ENCODE measurements at regions of chr1 and their contacts with region 1.

Region 1: DNA sequence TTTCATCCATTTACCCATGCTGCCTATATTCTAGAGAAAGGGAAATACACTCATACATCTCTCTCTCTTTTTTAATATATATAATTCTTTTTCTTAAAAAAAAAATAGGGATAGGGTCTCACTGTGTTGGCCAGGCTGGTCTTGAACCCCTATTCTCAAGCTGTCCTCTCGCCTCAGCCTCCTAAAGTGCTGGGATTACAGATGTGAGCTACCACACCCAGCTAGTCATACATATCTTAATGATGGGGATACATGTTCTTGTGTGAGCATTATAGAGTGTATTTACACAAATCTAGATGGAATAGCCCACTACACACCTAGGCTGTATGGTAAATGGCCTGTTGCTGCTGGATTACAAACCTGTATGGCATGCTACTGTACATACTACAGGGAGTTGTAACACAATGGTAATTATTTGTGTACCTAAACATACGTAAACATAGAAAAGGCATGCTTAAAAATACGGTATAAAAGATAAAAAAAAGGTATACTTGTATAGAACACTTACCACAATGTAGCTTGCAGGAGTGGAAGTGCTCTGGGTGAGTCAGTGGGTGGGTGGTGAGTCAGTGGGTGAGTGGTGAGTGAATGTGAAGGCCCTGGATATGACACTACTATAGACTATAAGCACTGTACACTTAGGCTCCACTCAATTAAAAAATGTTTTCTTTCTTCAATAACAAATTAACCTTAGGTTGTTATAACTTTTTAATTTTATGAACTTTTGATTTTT is 72.9 kb downstream of the IVNS1ABP start:
- DNase-seq: no peak
- H3K4me3 Mint-ChIP-seq: no peak overlapping the region
- H3K27ac Mint-ChIP-seq: no peak overlapping the region
- H3K4me1 Mint-ChIP-seq: peaks cover 12% of the 10 kb centered on the region
- H3K27me3 Mint-ChIP-seq: no peaks in the 10 kb centered on the region

Region 2: DNA sequence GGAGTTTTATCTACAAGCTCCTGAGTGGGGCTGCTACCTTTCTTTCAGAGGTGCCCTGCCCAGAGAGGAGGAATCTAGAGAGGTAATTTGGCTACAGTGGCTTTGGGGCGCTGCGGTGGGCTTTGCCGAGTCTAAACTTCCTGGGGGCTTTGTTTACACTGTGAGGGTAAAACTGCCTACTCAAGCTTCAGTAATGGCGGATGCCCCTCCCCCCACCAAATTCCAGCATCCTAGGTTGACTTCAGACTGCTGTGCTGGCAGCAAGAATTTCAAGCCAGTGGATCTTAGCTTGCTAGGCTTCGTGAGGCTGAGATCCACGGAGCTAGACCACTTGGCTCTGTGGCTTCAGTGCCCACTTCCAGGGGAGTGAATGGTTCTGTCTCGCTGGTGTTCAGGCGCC is 43.3 kb before region 1 on chr1:
- intact Hi-C with region 1: no loop called
- DNase-seq: no peak
- H3K4me3 Mint-ChIP-seq: no peak overlapping the region
- H3K27ac Mint-ChIP-seq: no peak overlapping the region
- H3K4me1 Mint-ChIP-seq: no peaks in the 10 kb centered on the region
- H3K27me3 Mint-ChIP-seq: no peaks in the 10 kb centered on the region

Region 3: GRCh38 chr1:185281245-185281644 is 37.1 kb after region 1 on chr1:
- intact Hi-C with region 1: loop called (anchors 5 kb)
- DNase-seq: peak; percentile 13
- H3K4me3 Mint-ChIP-seq: peak overlapping the region; percentile 44
- H3K27ac Mint-ChIP-seq: peak overlapping the region; percentile 69
- H3K4me1 Mint-ChIP-seq: peaks cover 44% of the 10 kb centered on the region
- H3K27me3 Mint-ChIP-seq: no peaks in the 10 kb centered on the region

Measured in activated T-helper 1 cell treated with anti-CD3 and anti-CD28 coated beads, Interleukin-12 subunit alpha, Interleukin-12 subunit beta, Interleukin-2, Interleukin-4 antibody, amounts not matched to agents 30 ng/mL and 10 ng/mL and 1 ng/mL, durations not matched to agents 14 hours and 24 hours and 36 hours (primary cell).